Heart left ventricle (tissue), 16 donors: ENCODE measurements at regions of chr10 and their contacts with region 1.

Region 1: GRCh38 chr10:110681023-110681681 is 37.0 kb downstream of the RBM20 start:
- DNase-seq: peak in 4 of 5 donors; percentile 55 to 66 (median 65)
- ATAC-seq: peak; percentile 27 to 60 (median 51)
- H3K4me3 ChIP-seq: no peak overlapping the region
- H3K27ac ChIP-seq: peak overlapping the region; percentile 55 to 95 (median 86)
- H3K4me1 ChIP-seq: peaks cover 0 to 78% (median 12%) of the 10 kb centered on the region in 12 donors
- H3K27me3 ChIP-seq: no peaks in the 10 kb centered on the region
- CTCF ChIP-seq: peak; percentile 35 to 72 (median 58)
- POLR2A ChIP-seq: no peak

Region 2: GRCh38 chr10:110610308-110610774 is 70.8 kb before region 1 on chr10:
- intact Hi-C with region 1: loop called in 3 of 10 experiments (anchors 2 to 5 kb)
- DNase-seq: peak in 2 of 5 donors; percentile 34 to 44
- ATAC-seq: peak; percentile 35 to 72 (median 64)
- H3K4me3 ChIP-seq: no peak overlapping the region
- H3K27ac ChIP-seq: peak overlapping the region in 8 of 12 donors; percentile 18 to 69 (median 36)
- H3K4me1 ChIP-seq: peaks cover 0 to 27% (median 0%) of the 10 kb centered on the region in 12 donors
- H3K27me3 ChIP-seq: no peaks in the 10 kb centered on the region
- CTCF ChIP-seq: peak; percentile 71 to 88 (median 80)
- POLR2A ChIP-seq: no peak

Region 3: DNA sequence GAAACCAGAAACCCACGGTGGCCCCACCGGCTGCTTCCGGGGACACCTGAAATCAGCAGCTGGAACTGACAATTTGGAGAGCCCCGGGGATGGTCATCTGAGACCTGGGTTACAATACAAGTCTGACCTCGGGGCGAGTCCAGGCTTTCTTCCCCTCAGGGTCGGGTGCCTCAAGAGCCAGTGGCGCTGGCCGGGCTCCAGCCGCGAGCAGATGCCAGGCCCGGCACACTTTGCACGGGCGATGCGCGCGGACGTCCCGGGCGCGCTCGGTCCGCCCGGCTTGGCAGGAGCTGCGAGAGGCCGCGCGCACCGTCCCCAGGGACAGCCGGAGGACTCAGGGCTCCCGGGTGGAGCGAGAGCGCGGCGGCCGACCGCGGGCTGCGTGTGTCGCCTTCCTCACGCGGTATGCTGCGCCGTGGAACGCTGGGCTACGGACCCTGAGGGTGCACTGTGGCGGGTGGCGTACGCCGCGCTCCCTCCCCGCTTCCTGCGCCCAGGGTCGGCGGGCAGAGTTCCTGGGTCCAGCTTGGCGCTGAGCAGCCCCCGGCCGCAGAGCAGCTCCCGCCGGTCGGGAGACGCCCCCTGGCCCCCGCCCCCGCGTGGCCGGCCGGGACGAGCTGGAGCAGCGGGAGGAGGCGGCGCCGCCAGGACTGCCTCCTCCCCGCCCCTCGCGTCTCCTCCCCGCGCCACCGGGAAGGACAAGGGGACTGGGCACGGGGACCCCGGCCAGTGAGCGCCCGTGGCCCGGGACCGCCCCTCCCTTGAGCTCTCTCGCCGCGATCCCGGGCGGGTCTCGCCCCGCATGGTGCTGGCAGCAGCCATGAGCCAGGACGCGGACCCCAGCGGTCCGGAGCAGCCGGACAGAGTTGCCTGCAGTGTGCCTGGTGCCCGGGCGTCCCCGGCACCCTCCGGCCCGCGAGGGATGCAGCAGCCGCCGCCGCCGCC is 37.2 kb before region 1 on chr10 and contains the start of gene RBM20:
- intact Hi-C with region 1: loop called in 7 of 10 experiments (anchors 5 kb)
- DNase-seq: peak; percentile 71 to 82 (median 79)
- ATAC-seq: peak; percentile 57 to 91 (median 80)
- H3K4me3 ChIP-seq: peak within 1 kb of the TSS; percentile 54 to 75 (median 64)
- H3K27ac ChIP-seq: peak within 1 kb of the TSS; percentile 82 to 96 (median 92)
- H3K4me1 ChIP-seq: peaks cover 0 to 29% (median 11%) of the 10 kb centered on the region in 12 donors
- H3K27me3 ChIP-seq: peaks cover 0 to 78% (median 24%) of the 10 kb centered on the region in 9 donors
- CTCF ChIP-seq: peak in 1 of 12 donors; percentile 6
- POLR2A ChIP-seq: peak in 1 of 2 donors; percentile 84
- total RNA-seq, gene RBM20: 73.0 to 152 (median 96.9) TPM

Region 4: GRCh38 chr10:110651044-110651958 is 29.9 kb before region 1 on chr10:
- intact Hi-C with region 1: loop called in 5 of 10 experiments (anchors 2 to 5 kb)
- DNase-seq: peak in 3 of 5 donors; percentile 49 to 65 (median 60)
- ATAC-seq: peak; percentile 82 to 91 (median 86)
- H3K4me3 ChIP-seq: peak overlapping the region in 1 of 12 donors; percentile 6
- H3K27ac ChIP-seq: peak overlapping the region in 11 of 12 donors; percentile 1 to 96 (median 73)
- H3K4me1 ChIP-seq: peaks cover 0 to 58% (median 14%) of the 10 kb centered on the region in 12 donors
- H3K27me3 ChIP-seq: peaks cover 0 to 31% (median 5%) of the 10 kb centered on the region in 9 donors
- CTCF ChIP-seq: no peak
- POLR2A ChIP-seq: no peak

Region 5: GRCh38 chr10:110698782-110699201 is 17.6 kb after region 1 on chr10:
- intact Hi-C with region 1: loop called in 1 of 10 experiments (anchors 2 kb)
- DNase-seq: peak in 4 of 5 donors; percentile 56 to 83 (median 76)
- ATAC-seq: peak; percentile 61 to 91 (median 80)
- H3K4me3 ChIP-seq: no peak overlapping the region
- H3K27ac ChIP-seq: peak overlapping the region; percentile 67 to 94 (median 81)
- H3K4me1 ChIP-seq: peaks cover 0 to 82% (median 25%) of the 10 kb centered on the region in 12 donors
- H3K27me3 ChIP-seq: no peaks in the 10 kb centered on the region
- CTCF ChIP-seq: no peak
- POLR2A ChIP-seq: no peak

Region 6: GRCh38 chr10:110739811-110740271 is 58.7 kb after region 1 on chr10:
- intact Hi-C with region 1: loop called in 1 of 10 experiments (anchors 2 kb)
- DNase-seq: peak in 1 of 5 donors; percentile 55
- ATAC-seq: peak; percentile 23 to 75 (median 58)
- H3K4me3 ChIP-seq: no peak overlapping the region
- H3K27ac ChIP-seq: peak overlapping the region in 11 of 12 donors; percentile 57 to 90 (median 73)
- H3K4me1 ChIP-seq: peaks cover 2 to 92% (median 19%) of the 10 kb centered on the region in 12 donors
- H3K27me3 ChIP-seq: peaks cover 0 to 2% (median 0%) of the 10 kb centered on the region in 9 donors
- CTCF ChIP-seq: no peak
- POLR2A ChIP-seq: no peak

Region 7: GRCh38 chr10:110765188-110765990 is 84.2 kb after region 1 on chr10:
- intact Hi-C with region 1: loop called in 1 of 10 experiments (anchors 10 kb)
- DNase-seq: no peak
- ATAC-seq: peak in 3 of 4 donors; percentile 14 to 38 (median 31)
- H3K4me3 ChIP-seq: peak overlapping the region in 11 of 12 donors; percentile 2 to 51 (median 44)
- H3K27ac ChIP-seq: peak overlapping the region; percentile 73 to 96 (median 80)
- H3K4me1 ChIP-seq: peaks cover 0 to 41% (median 11%) of the 10 kb centered on the region in 12 donors
- H3K27me3 ChIP-seq: no peaks in the 10 kb centered on the region
- CTCF ChIP-seq: no peak
- POLR2A ChIP-seq: no peak